CD4-positive, alpha-beta memory T cell (primary cell): ENCODE measurements at regions of chr15 and their contacts with region 1.

Region 1: GRCh38 chr15:88638626-88639372 is at the start of gene ISG20:
- DNase-seq: peak; percentile 97 to 100 (median 99)
- H3K4me3 ChIP-seq: peak within 1 kb of the TSS; percentile 55 to 94
- H3K4me3 Mint-ChIP-seq: peak within 1 kb of the TSS; percentile 88 to 98 (median 95)
- H3K27ac ChIP-seq: peak within 1 kb of the TSS; percentile 100
- H3K27ac Mint-ChIP-seq: peak within 1 kb of the TSS; percentile 89 to 100 (median 99)
- H3K4me1 ChIP-seq: peaks cover 96% of the 10 kb centered on the region
- H3K4me1 Mint-ChIP-seq: peaks cover 55 to 86% (median 74%) of the 10 kb centered on the region in 4 donors
- H3K27me3 ChIP-seq: no peaks in the 10 kb centered on the region
- H3K27me3 Mint-ChIP-seq: no peaks in the 10 kb centered on the region
- total RNA-seq, gene ISG20: 144 to 153 TPM

Region 2: DNA sequence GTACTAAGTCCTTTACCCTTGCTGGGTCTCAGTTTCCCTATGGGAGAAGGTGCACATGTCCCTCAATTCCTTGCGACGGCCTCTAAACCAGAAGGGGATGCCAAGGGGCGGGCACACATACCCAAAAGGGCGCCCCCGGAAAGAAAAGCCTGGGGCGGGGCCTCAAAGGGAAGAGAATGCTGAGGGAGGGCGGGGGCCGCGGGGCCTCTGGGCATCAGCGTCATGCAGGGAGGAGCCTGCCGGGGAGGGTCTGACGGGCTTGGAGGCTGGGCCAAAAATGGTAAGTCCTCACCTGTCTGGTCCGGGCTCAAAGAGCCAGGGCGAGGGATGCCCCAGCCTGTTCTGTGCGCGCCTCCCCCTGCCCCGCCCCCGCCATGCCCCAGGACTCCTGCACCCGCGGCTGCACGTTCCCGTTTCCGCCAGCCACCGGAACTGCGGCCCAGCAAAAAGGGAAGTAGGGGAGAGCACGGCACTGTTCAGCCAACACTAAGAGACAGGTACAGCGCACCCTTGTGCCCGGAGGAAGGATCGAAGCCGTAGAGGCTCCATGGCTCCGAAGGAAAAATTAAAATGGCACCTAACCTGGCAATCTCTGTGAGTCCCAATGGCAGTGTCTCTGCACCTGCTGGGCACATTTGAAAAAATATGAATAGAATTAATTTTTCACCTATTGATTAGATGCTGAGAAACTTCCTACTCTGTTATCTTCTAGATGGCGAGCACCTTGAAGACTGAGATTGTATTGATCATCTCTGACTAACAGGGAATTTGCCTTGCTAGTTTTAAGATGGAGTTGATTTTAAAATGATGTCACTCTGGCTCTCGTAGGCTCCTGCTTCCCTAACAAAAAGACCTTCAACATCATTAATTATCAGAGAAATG is 92.3 kb before region 1 on chr15 and contains the start of gene DET1:
- CTCF ChIA-PET with region 1: no interaction called
- POLR2A ChIA-PET with region 1: no interaction called
- intact Hi-C with region 1: loop called (anchors 1 kb)
- DNase-seq: peak; percentile 92 to 97 (median 94)
- H3K4me3 ChIP-seq: peak within 1 kb of the TSS; percentile 34 to 63
- H3K4me3 Mint-ChIP-seq: peak within 1 kb of the TSS; percentile 92 to 95 (median 92)
- H3K27ac ChIP-seq: peak within 1 kb of the TSS; percentile 62
- H3K27ac Mint-ChIP-seq: peak within 1 kb of the TSS; percentile 86 to 97 (median 97)
- H3K4me1 ChIP-seq: peaks cover 9% of the 10 kb centered on the region
- H3K4me1 Mint-ChIP-seq: peaks cover 4 to 23% (median 8%) of the 10 kb centered on the region in 4 donors
- H3K27me3 ChIP-seq: no peaks in the 10 kb centered on the region
- H3K27me3 Mint-ChIP-seq: no peaks in the 10 kb centered on the region
- total RNA-seq, gene DET1: 11.5 to 11.7 TPM

Region 3: DNA sequence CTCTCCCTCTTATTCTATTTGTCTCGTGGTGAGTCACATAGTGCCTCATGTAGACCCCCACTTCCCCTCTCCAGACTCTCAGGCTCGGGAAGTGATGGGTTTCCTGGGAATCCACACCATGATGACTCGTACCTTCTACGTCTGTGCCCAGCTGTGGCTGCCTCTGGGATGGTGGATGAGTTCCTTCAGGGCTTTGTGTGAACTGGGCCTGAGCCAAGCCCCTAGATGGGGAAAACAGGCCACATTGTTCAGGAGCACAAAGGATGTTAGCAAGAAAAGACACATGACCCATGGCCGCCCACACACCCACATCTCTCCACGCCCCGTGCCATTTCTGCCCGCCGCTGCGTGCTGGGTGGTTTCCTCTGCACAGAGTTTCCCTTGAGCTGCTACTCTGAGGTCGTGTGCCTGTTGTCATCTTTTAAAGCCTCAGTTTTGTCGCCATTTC is 10.5 kb after region 1 on chr15:
- CTCF ChIA-PET with region 1: no interaction called
- POLR2A ChIA-PET with region 1: interaction called, 32 read pairs
- intact Hi-C with region 1: loop called (anchors 1 kb)
- DNase-seq: peak; percentile 62 to 76 (median 68)
- H3K4me3 ChIP-seq: peak overlapping the region in 1 of 2 donors; percentile 1
- H3K4me3 Mint-ChIP-seq: peak overlapping the region; percentile 22 to 89 (median 78)
- H3K27ac ChIP-seq: peak overlapping the region; percentile 78
- H3K27ac Mint-ChIP-seq: peak overlapping the region; percentile 94 to 98 (median 95)
- H3K4me1 ChIP-seq: peaks cover 96% of the 10 kb centered on the region
- H3K4me1 Mint-ChIP-seq: peaks cover 65 to 94% (median 79%) of the 10 kb centered on the region in 4 donors
- H3K27me3 ChIP-seq: no peaks in the 10 kb centered on the region
- H3K27me3 Mint-ChIP-seq: no peaks in the 10 kb centered on the region